Gastrocnemius medialis (tissue), 4 donors: ENCODE measurements at regions of chr20 and their contacts with region 1.

Region 1: GRCh38 chr20:62900052-62900691 is 26.1 kb downstream of the DIDO1 start:
- DNase-seq: peak in 1 of 2 donors; percentile 61
- ATAC-seq: peak; percentile 69 to 84
- H3K4me3 ChIP-seq: no peak overlapping the region
- H3K27ac ChIP-seq: no peak overlapping the region
- H3K4me1 ChIP-seq: peaks cover 5 to 12% of the 10 kb centered on the region in 2 donors
- H3K27me3 ChIP-seq: peaks cover 0 to 3% (median 0%) of the 10 kb centered on the region in 3 donors
- CTCF ChIP-seq: peak; percentile 78 to 93 (median 88)
- POLR2A ChIP-seq: no peak

Region 2: GRCh38 chr20:62861726-62862336 is 38.3 kb before region 1 on chr20 and contains the start of gene TCFL5:
- in situ Hi-C with region 1: no loop called
- intact Hi-C with region 1: no loop called
- DNase-seq: peak; percentile 82 to 84
- ATAC-seq: peak; percentile 89 to 90
- H3K4me3 ChIP-seq: peak within 1 kb of the TSS; percentile 40 to 52 (median 46)
- H3K27ac ChIP-seq: peak within 1 kb of the TSS; percentile 25 to 65 (median 44)
- H3K4me1 ChIP-seq: peaks cover 9% of the 10 kb centered on the region in 2 donors
- H3K27me3 ChIP-seq: no peaks in the 10 kb centered on the region
- CTCF ChIP-seq: no peak
- POLR2A ChIP-seq: no peak
- total RNA-seq, gene TCFL5: 5.3 to 7.3 (median 6.3) TPM

Region 3: GRCh38 chr20:62972270-62973032 is 72.3 kb after region 1 on chr20:
- in situ Hi-C with region 1: no loop called
- intact Hi-C with region 1: loop called (anchors 1 kb)
- DNase-seq: peak; percentile 68 to 70
- ATAC-seq: peak; percentile 89
- H3K4me3 ChIP-seq: peak overlapping the region in 2 of 4 donors; percentile 37 to 40
- H3K27ac ChIP-seq: no peak overlapping the region
- H3K4me1 ChIP-seq: peaks cover 0 to 4% of the 10 kb centered on the region in 2 donors
- H3K27me3 ChIP-seq: peaks cover 57 to 67% (median 58%) of the 10 kb centered on the region in 3 donors
- CTCF ChIP-seq: peak; percentile 75 to 90 (median 87)
- POLR2A ChIP-seq: no peak

Region 4: DNA sequence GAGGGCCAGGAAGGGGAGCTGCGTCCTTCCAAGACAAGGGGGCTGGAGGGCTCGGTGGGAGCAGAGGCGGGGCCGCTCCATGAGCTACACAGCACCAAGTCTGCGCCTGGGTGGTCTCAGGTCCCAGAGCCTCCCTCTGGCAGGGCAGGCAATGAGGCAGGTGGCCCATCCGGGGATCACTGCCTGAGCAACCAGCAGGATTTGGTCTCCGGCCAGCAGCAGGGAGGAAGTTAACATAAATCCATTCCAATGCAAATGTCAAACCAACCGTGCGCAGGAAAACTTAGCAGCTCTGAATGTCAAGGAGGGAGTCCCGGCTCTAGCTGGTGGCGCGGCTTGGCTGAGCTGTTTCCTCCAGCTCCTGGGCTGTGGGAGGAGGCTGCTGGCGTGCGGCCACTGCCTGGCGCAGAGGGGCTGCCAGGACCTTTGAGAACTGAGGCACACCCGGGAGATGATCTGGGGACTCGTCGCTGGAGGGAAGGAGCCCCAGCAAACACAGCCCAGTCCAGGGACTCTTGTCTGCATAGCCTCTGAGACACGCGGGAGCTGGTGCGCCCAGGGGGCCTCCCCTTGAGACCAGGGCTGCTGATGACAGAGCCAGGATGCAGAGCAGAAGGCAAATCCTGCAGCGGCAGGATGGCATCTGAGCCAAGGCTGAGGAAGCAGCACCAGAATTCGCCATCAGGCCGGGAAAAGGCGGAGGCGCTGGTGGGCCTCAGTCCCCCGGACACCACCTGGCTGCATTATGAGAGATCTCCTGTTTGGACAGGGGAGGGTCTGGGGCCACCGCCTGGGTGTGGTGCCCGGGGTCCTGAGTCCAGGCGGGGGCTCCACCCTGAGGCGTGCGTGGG is 494.1 kb after region 1 on chr20:
- in situ Hi-C with region 1: no loop called
- intact Hi-C with region 1: no loop called
- DNase-seq: no peak
- ATAC-seq: no peak
- H3K4me3 ChIP-seq: no peak overlapping the region
- H3K27ac ChIP-seq: no peak overlapping the region
- H3K4me1 ChIP-seq: no peaks in the 10 kb centered on the region
- H3K27me3 ChIP-seq: peaks cover 5 to 27% (median 8%) of the 10 kb centered on the region in 3 donors
- CTCF ChIP-seq: no peak
- POLR2A ChIP-seq: no peak